Panc1 (cell line): ENCODE measurements at regions of chr14 and their contacts with region 1.

Region 1: GRCh38 chr14:93705513-93706156 is 82.7 kb downstream of the PRIMA1 start:
- DNase-seq: no peak
- ATAC-seq: no peak
- H3K4me3 ChIP-seq: no peak overlapping the region
- H3K27ac ChIP-seq: no peak overlapping the region
- H3K4me1 ChIP-seq: no peaks in the 10 kb centered on the region
- H3K27me3 ChIP-seq: no peaks in the 10 kb centered on the region
- CTCF ChIP-seq: no peak

Region 2: GRCh38 chr14:93663317-93663716 is 42.3 kb before region 1 on chr14:
- CTCF ChIA-PET with region 1: no interaction called
- POLR2A ChIA-PET with region 1: no interaction called
- in situ Hi-C with region 1: no loop called
- intact Hi-C with region 1: loop called (anchors 2 kb)
- DNase-seq: no peak
- ATAC-seq: no peak
- H3K4me3 ChIP-seq: no peak overlapping the region
- H3K27ac ChIP-seq: no peak overlapping the region
- H3K4me1 ChIP-seq: no peaks in the 10 kb centered on the region
- H3K27me3 ChIP-seq: no peaks in the 10 kb centered on the region; the same call in 1 of the 2 replicates
- CTCF ChIP-seq: no peak